Adrenal gland (tissue), 19 donors: ENCODE measurements at regions of chr15 and their contacts with region 1.

Region 1: GRCh38 chr15:39580117-39580484 is 778 bp upstream of the THBS1 start:
- DNase-seq: peak; percentile 87 to 96 (median 88)
- H3K4me3 ChIP-seq: peak overlapping the region in 2 of 4 donors; percentile 15 to 45
- H3K27ac ChIP-seq: peak overlapping the region in 4 of 5 donors; percentile 56 to 91 (median 84)
- H3K4me1 ChIP-seq: peaks cover 0 to 8% of the 10 kb centered on the region in 2 donors
- H3K27me3 ChIP-seq: peaks cover 7% of the 10 kb centered on the region
- CTCF ChIP-seq: peak; percentile 78 to 100 (median 94)
- POLR2A ChIP-seq: no peak

Region 2: DNA sequence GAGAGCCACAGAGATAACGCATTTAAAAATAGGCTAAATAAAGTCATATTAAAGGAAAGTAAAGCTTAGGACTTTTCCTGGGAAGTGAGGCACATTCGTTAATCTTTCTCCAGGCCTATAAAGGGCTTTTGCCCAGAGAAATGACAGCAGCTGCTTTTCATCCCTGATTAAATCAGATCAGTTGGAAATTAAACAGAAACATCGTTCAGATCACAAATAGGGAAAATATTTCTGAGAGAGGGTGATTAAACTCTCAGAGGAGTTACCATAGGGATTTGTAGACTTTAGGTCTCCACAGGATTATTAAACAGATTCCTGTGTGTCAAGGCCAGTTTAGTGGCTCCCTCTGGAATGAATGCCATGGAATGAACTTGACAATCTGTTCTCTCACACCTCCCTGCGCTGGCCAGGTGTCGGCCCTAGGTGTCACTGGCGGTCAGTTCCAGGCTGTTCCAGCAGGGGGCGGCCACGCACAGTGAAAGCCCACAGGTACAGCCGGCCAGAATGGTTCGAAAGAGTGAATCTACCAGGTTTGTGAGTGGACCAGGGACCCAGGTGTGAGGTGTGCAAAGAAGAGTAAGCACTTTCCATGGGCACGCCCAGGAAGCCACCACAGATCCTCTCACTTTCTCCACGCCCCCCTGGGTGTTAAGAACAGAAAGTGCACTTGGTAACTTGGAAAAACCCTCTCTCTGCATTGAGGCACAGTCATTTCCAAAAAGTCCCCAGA is 762.5 kb before region 1 on chr15:
- intact Hi-C with region 1: loop called in 1 of 2 experiments (anchors 5 kb)
- DNase-seq: peak; percentile 66 to 93 (median 79)
- H3K4me3 ChIP-seq: no peak overlapping the region
- H3K27ac ChIP-seq: no peak overlapping the region
- H3K4me1 ChIP-seq: no peaks in the 10 kb centered on the region
- H3K27me3 ChIP-seq: no peaks in the 10 kb centered on the region
- CTCF ChIP-seq: peak; percentile 93 to 99 (median 96)
- POLR2A ChIP-seq: no peak

Region 3: GRCh38 chr15:39124553-39125171 is 455.4 kb before region 1 on chr15:
- intact Hi-C with region 1: loop called in 1 of 2 experiments (anchors 5 kb)
- DNase-seq: no peak
- H3K4me3 ChIP-seq: no peak overlapping the region
- H3K27ac ChIP-seq: no peak overlapping the region
- H3K4me1 ChIP-seq: peaks cover 22 to 23% of the 10 kb centered on the region in 2 donors
- H3K27me3 ChIP-seq: no peaks in the 10 kb centered on the region
- CTCF ChIP-seq: no peak
- POLR2A ChIP-seq: no peak

Region 4: DNA sequence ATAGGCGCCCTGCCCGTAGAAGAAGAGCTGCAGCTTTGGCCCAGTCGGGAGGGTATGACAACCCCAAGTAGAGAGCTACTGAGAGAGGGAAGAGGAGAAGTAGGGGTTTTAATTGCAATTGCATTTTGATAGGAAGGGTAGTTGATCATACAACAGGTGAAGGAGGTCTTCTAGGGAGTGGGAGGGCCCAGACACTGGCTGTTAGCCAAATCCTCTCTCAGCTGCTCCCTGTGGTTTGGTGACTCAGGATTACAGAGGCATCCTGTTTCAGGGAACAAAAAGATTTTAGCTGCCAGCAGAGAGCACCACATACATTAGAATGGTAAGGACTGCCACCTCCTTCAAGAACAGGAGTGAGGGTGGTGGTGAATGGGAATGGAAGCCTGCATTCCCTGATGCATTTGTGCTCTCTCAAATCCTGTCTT is 408.1 kb before region 1 on chr15:
- intact Hi-C with region 1: loop called in 1 of 2 experiments (anchors 5 kb)
- DNase-seq: peak; percentile 36 to 81 (median 60)
- H3K4me3 ChIP-seq: no peak overlapping the region
- H3K27ac ChIP-seq: peak overlapping the region in 2 of 5 donors; percentile 23 to 51
- H3K4me1 ChIP-seq: peaks cover 0 to 8% of the 10 kb centered on the region in 2 donors
- H3K27me3 ChIP-seq: no peaks in the 10 kb centered on the region
- CTCF ChIP-seq: peak in 5 of 6 experiments; percentile 32 to 55 (median 49)
- POLR2A ChIP-seq: no peak

Region 5: GRCh38 chr15:39312984-39313383 is 267.1 kb before region 1 on chr15:
- intact Hi-C with region 1: loop called in 1 of 2 experiments (anchors 10 kb)
- DNase-seq: peak in 5 of 7 donors; percentile 18 to 58 (median 40)
- H3K4me3 ChIP-seq: no peak overlapping the region
- H3K27ac ChIP-seq: no peak overlapping the region
- H3K4me1 ChIP-seq: no peaks in the 10 kb centered on the region
- H3K27me3 ChIP-seq: no peaks in the 10 kb centered on the region
- CTCF ChIP-seq: peak in 3 of 6 experiments; percentile 38 to 46 (median 45)
- POLR2A ChIP-seq: no peak